ENCODE measurements at regions of chr10 and their contacts with region 1.

Region 1: GRCh38 chr10:111076191-111076681 is 593 bp upstream of the ADRA2A start:
- DNase-seq: peak; percentile 40
- ATAC-seq: peak; percentile 62
- H3K4me3 Mint-ChIP-seq: peak overlapping the region; percentile 74
- H3K27ac Mint-ChIP-seq: no peak overlapping the region
- H3K4me1 Mint-ChIP-seq: peaks cover 20% of the 10 kb centered on the region
- H3K27me3 Mint-ChIP-seq: peaks cover 50% of the 10 kb centered on the region
- CTCF ChIP-seq: no peak

Region 2: DNA sequence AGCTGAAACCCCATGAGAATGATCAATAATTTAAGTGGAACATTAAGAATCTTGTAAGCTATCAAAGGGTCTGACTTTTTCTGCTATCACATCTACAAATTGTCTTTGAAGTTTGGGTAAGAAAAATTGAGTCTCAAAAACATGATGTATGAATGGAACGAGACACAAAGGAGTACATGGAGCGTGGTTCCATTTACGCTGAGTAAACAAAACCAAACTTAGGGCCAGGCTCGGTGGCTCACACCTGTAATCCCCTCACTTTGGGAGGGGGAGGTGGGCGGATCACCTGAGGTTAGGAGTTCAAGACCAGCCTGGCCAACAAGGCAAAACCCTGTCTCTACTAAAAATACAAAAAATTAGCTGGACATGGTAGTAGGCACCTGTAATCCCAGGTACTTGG is 484.5 kb before region 1 on chr10:
- CTCF ChIA-PET with region 1: no interaction called
- POLR2A ChIA-PET with region 1: no interaction called
- intact Hi-C with region 1: no loop called
- DNase-seq: no peak
- ATAC-seq: no peak
- H3K4me3 Mint-ChIP-seq: no peak overlapping the region
- H3K27ac Mint-ChIP-seq: no peak overlapping the region
- H3K4me1 Mint-ChIP-seq: peaks cover 2% of the 10 kb centered on the region
- H3K27me3 Mint-ChIP-seq: no peaks in the 10 kb centered on the region
- CTCF ChIP-seq: no peak

Region 3: DNA sequence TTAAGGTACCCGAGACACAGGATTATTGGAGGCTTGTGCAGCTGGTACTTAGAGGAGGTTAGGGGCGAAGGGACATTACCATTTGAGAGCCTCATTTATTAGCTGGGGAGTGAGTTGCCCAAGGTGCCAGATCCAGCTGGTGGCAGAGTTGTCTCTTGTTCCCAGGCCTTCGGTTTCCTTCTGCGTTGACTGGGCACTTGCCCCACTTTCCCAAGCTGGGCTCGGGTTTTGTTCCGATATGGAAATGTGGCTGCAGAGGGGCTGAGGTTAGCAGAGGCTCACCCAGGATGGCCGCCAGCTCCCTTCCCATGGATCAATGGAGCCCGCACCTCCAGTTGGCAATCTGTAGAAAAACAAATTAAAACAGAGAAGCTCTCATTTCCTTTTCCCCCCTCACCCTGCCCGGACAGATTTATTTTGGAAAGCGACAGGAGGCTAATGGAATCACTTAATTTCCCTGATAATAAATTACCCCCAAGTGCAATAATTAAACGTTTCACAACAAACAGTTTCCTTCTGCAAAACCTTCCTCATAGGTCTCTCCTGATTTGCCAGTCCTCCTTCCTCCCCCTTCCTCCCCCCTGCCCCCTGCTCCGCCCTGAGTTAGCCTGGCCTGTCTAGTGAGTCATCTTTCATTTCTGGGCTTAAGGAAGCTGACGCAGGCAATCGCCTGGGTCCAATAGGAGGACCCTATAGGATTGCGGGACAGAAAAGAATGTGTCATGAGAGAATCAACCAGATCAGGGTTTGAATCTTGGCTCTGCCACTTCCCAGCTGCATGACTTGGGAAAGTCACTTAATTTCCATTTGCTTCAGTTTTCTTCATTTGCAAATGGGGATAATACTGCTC is 52.3 kb after region 1 on chr10:
- CTCF ChIA-PET with region 1: no interaction called
- POLR2A ChIA-PET with region 1: no interaction called
- intact Hi-C with region 1: no loop called
- DNase-seq: no peak
- ATAC-seq: no peak
- H3K4me3 Mint-ChIP-seq: no peak overlapping the region
- H3K27ac Mint-ChIP-seq: no peak overlapping the region
- H3K4me1 Mint-ChIP-seq: no peaks in the 10 kb centered on the region
- H3K27me3 Mint-ChIP-seq: peaks cover 14% of the 10 kb centered on the region
- CTCF ChIP-seq: no peak

Region 4: DNA sequence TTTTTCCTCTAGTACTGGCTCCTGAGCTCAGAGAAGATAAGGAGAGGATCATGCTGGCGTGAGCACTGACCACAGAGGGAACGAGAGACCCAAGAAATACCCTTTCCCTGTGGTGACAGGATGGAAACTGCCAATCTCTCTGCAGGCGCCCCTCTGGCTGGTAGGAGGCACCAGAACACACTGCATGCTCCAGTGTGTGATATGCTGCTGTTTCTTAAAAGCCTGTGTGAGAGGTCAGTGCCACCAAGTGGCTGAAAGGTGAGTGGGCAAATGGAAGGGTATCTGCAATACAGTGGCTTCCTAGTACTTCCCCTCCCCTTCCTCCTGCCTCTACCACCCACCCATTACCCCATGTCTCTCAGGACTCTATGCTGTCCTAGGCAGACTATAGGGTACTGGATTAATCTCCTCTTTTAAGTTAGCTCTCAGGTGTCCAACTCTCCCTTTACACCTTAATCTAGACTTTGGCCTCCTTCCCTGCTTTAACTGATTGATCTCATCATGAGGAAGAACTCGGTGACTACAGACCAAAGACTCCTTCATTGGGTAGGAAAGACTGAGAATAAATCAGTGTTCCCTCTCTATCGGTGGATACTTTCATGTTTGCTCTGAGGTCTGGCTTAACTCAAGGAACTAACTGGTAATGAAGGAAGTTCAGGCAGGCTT is 284.2 kb after region 1 on chr10:
- CTCF ChIA-PET with region 1: no interaction called
- POLR2A ChIA-PET with region 1: no interaction called
- intact Hi-C with region 1: loop called (anchors 1 kb)
- DNase-seq: no peak
- ATAC-seq: no peak
- H3K4me3 Mint-ChIP-seq: no peak overlapping the region
- H3K27ac Mint-ChIP-seq: no peak overlapping the region
- H3K4me1 Mint-ChIP-seq: no peaks in the 10 kb centered on the region
- H3K27me3 Mint-ChIP-seq: peaks cover 14% of the 10 kb centered on the region
- CTCF ChIP-seq: no peak